ENCODE measurements at regions of chr3 and their contacts with region 1.

Region 1: GRCh38 chr3:37559461-37559860 is 302.2 kb upstream of the CTDSPL start:
- DNase-seq: peak; percentile 9
- H3K4me3 ChIP-seq: no peak overlapping the region
- H3K27ac ChIP-seq: no peak overlapping the region
- H3K4me1 ChIP-seq: no peaks in the 10 kb centered on the region
- H3K27me3 ChIP-seq: no peaks in the 10 kb centered on the region
- CTCF ChIP-seq: no peak

Region 2: GRCh38 chr3:37700466-37701248 is 141.2 kb after region 1 on chr3:
- CTCF ChIA-PET with region 1: no interaction called
- dilution Hi-C with region 1: no loop called
- in situ Hi-C with region 1: no loop called
- intact Hi-C with region 1: loop called (anchors 5 kb)
- DNase-seq: no peak
- H3K4me3 ChIP-seq: no peak overlapping the region
- H3K27ac ChIP-seq: no peak overlapping the region
- H3K4me1 ChIP-seq: peaks cover 5% of the 10 kb centered on the region
- H3K27me3 ChIP-seq: no peaks in the 10 kb centered on the region
- CTCF ChIP-seq: peak; percentile 22 to 62

Measured in mammary epithelial cell (primary cell).